ENCODE measurements at regions of chr7 and their contacts with region 1.

Region 1: GRCh38 chr7:101165075-101165957 is at the start of gene VGF:
- DNase-seq: peak; percentile 98
- H3K4me3 Mint-ChIP-seq: peak within 1 kb of the TSS; percentile 92
- H3K27ac Mint-ChIP-seq: peak within 1 kb of the TSS; percentile 84
- H3K4me1 Mint-ChIP-seq: peaks cover 45% of the 10 kb centered on the region
- H3K27me3 Mint-ChIP-seq: peaks cover 58% of the 10 kb centered on the region
- total RNA-seq, gene VGF: 0.23 and 0.28 TPM in 2 replicates

Region 2: DNA sequence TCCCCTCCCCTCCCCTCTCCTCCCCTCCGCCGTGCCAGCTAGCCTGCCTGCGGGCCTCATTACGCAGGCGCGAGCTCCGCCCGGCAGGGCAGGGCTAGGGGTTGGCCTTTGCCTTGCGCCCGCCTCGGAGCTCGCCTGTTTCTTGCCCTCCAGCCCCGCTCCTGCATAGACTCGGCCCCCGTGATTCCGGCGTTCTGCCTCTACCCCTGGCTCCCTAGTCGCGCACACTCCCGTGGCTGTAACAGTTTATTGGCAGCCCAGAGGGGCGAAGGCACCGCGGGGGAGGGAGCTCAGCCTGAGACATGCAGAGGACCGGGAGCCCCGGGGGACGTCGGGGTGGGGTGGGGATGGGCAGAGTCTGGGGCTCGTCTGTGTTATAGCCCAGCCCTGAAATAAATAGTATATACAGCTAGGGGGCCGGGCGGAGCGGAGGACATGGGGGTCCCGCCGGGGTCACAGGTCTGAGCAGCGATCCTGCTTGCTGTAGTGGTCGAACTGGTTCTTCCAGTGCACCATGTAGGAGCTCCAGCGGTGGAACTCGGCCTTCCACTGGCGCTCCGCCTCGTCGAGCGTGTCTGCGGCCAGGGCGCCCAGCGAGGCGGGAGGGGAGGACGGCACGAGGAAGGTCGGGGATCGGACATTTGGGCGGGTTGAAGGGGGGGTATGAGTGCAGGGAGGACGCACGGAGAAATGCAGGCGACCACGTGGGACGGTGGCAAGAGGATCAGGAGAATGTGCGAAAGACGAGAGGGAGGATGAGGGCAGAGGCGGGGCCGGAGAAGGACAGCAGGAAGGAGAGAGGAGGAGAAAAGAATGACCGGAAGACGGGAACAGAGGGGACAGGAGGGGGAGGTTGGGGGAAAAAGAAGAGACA is 275.3 kb before region 1 on chr7:
- intact Hi-C with region 1: loop called (anchors 5 kb)
- DNase-seq: peak; percentile 98
- H3K4me3 Mint-ChIP-seq: peak overlapping the region; percentile 83
- H3K27ac Mint-ChIP-seq: peak overlapping the region; percentile 77
- H3K4me1 Mint-ChIP-seq: peaks cover 39% of the 10 kb centered on the region
- H3K27me3 Mint-ChIP-seq: peaks cover 32% of the 10 kb centered on the region

Region 3: GRCh38 chr7:101153969-101154692 is 11.2 kb before region 1 on chr7 and contains the start of gene AP1S1:
- intact Hi-C with region 1: loop called (anchors 1 kb)
- DNase-seq: peak; percentile 98
- H3K4me3 Mint-ChIP-seq: peak within 1 kb of the TSS; percentile 86
- H3K27ac Mint-ChIP-seq: peak within 1 kb of the TSS; percentile 65
- H3K4me1 Mint-ChIP-seq: peaks cover 14% of the 10 kb centered on the region
- H3K27me3 Mint-ChIP-seq: peaks cover 18% of the 10 kb centered on the region
- total RNA-seq, gene AP1S1: 44.2 and 49.2 TPM in 2 replicates

Region 4: GRCh38 chr7:101308245-101309085 is 143.1 kb after region 1 on chr7:
- intact Hi-C with region 1: loop called (anchors 10 kb)
- DNase-seq: peak; percentile 75
- H3K4me3 Mint-ChIP-seq: peak overlapping the region; percentile 93
- H3K27ac Mint-ChIP-seq: peak overlapping the region; percentile 92
- H3K4me1 Mint-ChIP-seq: peaks cover 3% of the 10 kb centered on the region
- H3K27me3 Mint-ChIP-seq: peaks cover 24% of the 10 kb centered on the region

Region 5: DNA sequence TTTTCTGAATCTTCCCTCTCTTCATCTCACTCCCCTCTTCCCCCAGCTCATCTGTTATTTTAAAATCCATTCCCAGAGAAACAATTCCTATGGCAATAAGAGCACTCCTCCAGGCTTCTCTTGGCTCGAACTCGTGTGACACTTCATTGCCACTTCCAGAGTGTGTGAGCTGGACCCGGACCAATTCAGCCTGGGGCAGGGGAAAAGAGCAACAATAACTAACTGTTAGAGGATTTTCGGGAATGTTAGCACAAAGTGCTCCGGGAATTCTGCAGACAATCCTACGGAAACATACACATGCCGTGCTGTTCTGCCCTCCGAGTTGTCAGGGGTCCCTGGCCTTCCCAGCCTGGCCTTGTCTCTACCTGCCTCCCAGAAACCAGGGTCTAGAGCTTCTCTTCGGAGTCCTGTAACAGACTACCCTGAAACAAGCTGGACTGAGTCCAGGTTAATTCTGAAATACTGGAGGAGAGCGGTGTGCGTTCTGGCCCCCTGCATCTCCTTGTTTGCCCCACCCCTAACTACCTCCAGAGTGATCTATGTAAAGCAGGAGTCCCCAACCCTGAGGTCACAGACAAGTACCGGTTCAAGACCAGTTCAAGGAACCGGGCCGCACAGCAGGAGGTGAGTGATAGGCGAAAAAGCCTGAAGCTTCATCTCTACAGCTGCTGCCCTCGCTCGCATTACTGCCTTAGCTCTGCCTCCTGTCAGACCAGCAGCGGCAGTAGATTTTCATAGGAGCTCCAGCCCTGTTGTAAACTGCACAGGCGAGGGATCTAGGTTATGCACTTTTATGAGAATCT is 208.7 kb after region 1 on chr7:
- intact Hi-C with region 1: no loop called
- DNase-seq: no peak
- H3K4me3 Mint-ChIP-seq: no peak overlapping the region
- H3K27ac Mint-ChIP-seq: no peak overlapping the region
- H3K4me1 Mint-ChIP-seq: no peaks in the 10 kb centered on the region
- H3K27me3 Mint-ChIP-seq: peaks cover 12% of the 10 kb centered on the region

Measured in activated CD4-positive, alpha-beta T cell treated with anti-CD3 and anti-CD28 coated beads, Interleukin-2, amount 10 ng/mL, durations not matched to agents 24 days and 14 days (primary cell).